ENCODE measurements at regions of chrX and their contacts with region 1.

Region 1: GRCh38 chrX:39149761-39150160 is 348.5 kb downstream of the MID1IP1 start:
- DNase-seq: peak; percentile 76
- H3K4me3 ChIP-seq: no peak overlapping the region
- H3K27ac ChIP-seq: no peak overlapping the region
- H3K4me1 ChIP-seq: no peaks in the 10 kb centered on the region
- H3K27me3 ChIP-seq: no peaks in the 10 kb centered on the region
- CTCF ChIP-seq: peak; percentile 76

Region 2: GRCh38 chrX:38768079-38768478 is 381.7 kb before region 1 on chrX:
- intact Hi-C with region 1: loop called (anchors 5 kb)
- DNase-seq: no peak
- H3K4me3 ChIP-seq: no peak overlapping the region
- H3K27ac ChIP-seq: no peak overlapping the region
- H3K4me1 ChIP-seq: no peaks in the 10 kb centered on the region
- H3K27me3 ChIP-seq: no peaks in the 10 kb centered on the region
- CTCF ChIP-seq: peak; percentile 18